ENCODE measurements at regions of chr15 and their contacts with region 1.

Region 1: GRCh38 chr15:43510200-43511011 is 7.0 kb upstream of the MAP1A start:
- DNase-seq: peak; percentile 98
- H3K4me3 ChIP-seq: peak overlapping the region; percentile 64 to 81 (median 79)
- H3K27ac ChIP-seq: peak overlapping the region; percentile 77
- H3K4me1 ChIP-seq: peaks cover 27% of the 10 kb centered on the region
- H3K27me3 ChIP-seq: no peaks in the 10 kb centered on the region
- CTCF ChIP-seq: peak in 1 of 2 donors; percentile 20
- POLR2A ChIP-seq: peak; percentile 71

Region 2: GRCh38 chr15:43410572-43411214 is 99.7 kb before region 1 on chr15:
- CTCF ChIA-PET with region 1: no interaction called
- POLR2A ChIA-PET with region 1: no interaction called
- dilution Hi-C with region 1: no loop called
- intact Hi-C with region 1: no loop called
- DNase-seq: no peak
- H3K4me3 ChIP-seq: no peak overlapping the region
- H3K27ac ChIP-seq: no peak overlapping the region
- H3K4me1 ChIP-seq: no peaks in the 10 kb centered on the region
- H3K27me3 ChIP-seq: no peaks in the 10 kb centered on the region
- CTCF ChIP-seq: no peak
- POLR2A ChIP-seq: no peak

Region 3: GRCh38 chr15:43440721-43441281 is 69.6 kb before region 1 on chr15:
- CTCF ChIA-PET with region 1: interaction called, 101 read pairs
- POLR2A ChIA-PET with region 1: no interaction called
- dilution Hi-C with region 1: no loop called
- intact Hi-C with region 1: loop called (anchors 1 kb)
- DNase-seq: peak; percentile 94
- H3K4me3 ChIP-seq: no peak overlapping the region
- H3K27ac ChIP-seq: peak overlapping the region; percentile 61
- H3K4me1 ChIP-seq: peaks cover 8% of the 10 kb centered on the region
- H3K27me3 ChIP-seq: no peaks in the 10 kb centered on the region
- CTCF ChIP-seq: peak; percentile 29 to 42
- POLR2A ChIP-seq: no peak

Region 4: DNA sequence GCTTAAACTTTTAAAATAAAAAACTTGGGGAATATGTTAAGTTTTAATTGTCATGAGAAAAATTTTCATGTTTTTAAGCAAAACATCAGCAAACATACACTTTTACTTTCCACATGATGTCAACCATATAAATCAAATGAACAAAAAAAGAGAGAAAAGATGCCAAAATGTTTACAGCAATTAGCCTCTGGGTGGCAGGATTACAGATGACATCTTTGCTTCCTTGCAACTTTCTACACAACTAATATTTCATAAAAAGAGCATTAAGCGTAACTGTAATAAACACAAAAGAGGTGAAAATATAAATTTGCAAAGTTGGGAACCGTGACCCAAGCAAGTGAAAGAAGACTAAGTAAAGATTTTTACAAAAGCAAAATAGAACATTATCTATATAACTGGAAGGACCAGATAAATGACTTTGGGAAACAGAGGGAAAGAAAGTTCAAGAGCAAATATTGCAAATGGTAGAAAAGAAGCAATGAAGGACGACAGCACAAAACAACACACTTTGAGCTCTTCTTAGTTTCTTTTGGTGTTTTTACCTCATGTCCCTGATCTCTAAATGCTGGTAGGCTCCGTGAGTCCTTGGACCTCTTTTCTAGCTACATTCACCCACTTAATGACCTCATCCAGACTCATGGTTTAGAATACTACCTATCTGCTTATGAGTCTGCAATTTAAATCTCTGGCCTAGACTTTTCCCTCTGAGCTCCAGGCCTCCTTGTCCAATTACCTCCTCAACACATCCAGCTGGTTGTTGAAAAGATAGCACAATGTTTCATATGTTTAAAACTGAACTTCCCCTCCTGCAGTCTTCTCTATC is 26.9 kb before region 1 on chr15:
- CTCF ChIA-PET with region 1: interaction called, 14 read pairs
- POLR2A ChIA-PET with region 1: no interaction called
- dilution Hi-C with region 1: no loop called
- intact Hi-C with region 1: loop called (anchors 2 kb)
- DNase-seq: peak; percentile 33
- H3K4me3 ChIP-seq: no peak overlapping the region
- H3K27ac ChIP-seq: no peak overlapping the region
- H3K4me1 ChIP-seq: no peaks in the 10 kb centered on the region
- H3K27me3 ChIP-seq: no peaks in the 10 kb centered on the region
- CTCF ChIP-seq: peak; percentile 9
- POLR2A ChIP-seq: no peak

Region 5: DNA sequence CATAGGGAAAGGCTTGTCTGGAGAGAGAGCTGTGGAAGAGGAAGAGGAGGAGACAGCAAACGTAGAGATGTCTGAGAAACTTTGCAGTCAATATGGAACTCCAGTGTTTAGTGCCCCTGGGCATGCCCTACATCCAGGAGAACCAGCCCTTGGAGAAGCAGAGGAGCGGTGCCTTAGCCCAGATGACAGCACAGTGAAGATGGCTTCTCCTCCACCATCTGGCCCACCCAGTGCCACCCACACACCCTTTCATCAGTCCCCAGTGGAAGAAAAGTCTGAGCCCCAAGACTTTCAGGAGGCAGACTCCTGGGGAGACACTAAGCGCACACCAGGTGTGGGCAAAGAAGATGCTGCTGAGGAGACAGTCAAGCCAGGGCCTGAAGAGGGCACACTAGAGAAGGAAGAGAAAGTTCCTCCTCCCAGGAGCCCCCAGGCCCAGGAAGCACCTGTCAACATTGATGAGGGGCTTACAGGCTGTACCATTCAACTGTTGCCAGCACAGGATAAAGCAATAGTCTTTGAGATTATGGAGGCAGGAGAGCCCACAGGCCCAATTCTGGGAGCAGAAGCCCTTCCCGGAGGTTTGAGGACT is 13.9 kb after region 1 on chr15:
- CTCF ChIA-PET with region 1: interaction called, 25 read pairs
- POLR2A ChIA-PET with region 1: no interaction called
- dilution Hi-C with region 1: no loop called
- intact Hi-C with region 1: no loop called
- DNase-seq: no peak
- H3K4me3 ChIP-seq: no peak overlapping the region
- H3K27ac ChIP-seq: no peak overlapping the region
- H3K4me1 ChIP-seq: no peaks in the 10 kb centered on the region
- H3K27me3 ChIP-seq: no peaks in the 10 kb centered on the region
- CTCF ChIP-seq: no peak
- POLR2A ChIP-seq: no peak

Region 6: DNA sequence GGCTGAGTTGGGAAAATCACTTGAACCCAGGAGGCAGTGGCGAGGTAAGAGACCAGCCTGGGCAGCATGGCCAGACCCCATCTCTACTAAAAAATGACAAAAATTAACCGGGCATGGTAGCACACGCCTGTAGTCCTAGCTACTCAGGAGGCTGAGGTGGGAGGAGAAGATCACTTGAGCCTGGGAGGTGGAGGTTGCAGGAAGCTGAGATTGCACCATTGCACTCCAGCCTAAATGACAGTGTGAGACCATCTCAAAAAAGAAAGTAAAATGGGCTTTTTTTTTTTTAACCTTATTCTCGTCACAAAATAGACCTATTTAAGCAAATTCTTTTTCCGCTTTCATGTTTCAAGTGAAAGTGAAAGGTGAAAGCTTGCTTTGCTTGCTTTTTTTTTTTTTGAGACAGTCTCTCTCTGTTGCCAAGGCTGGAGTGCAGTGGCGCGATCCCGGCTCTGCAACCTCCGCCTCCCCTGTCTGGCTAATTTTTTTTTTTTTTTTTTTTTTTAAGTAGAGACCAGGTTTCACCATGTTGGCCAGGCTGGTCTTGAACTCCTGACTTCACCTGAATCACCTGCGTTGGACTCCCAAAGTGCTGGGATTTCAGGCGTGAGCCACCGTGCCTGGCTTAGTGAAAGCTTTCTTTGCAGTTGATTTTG is 239.4 kb after region 1 on chr15:
- CTCF ChIA-PET with region 1: interaction called, 3 read pairs
- POLR2A ChIA-PET with region 1: interaction called, 3 read pairs
- dilution Hi-C with region 1: no loop called
- intact Hi-C with region 1: loop called (anchors 10 kb)
- DNase-seq: no peak
- H3K4me3 ChIP-seq: no peak overlapping the region
- H3K27ac ChIP-seq: no peak overlapping the region
- H3K4me1 ChIP-seq: peaks cover 4% of the 10 kb centered on the region
- H3K27me3 ChIP-seq: no peaks in the 10 kb centered on the region
- CTCF ChIP-seq: no peak
- POLR2A ChIP-seq: no peak

Measured in endothelial cell of umbilical vein (primary cell).